AG04450 (cell line): ENCODE measurements at regions of chr18 and their contacts with region 1.

Region 1: DNA sequence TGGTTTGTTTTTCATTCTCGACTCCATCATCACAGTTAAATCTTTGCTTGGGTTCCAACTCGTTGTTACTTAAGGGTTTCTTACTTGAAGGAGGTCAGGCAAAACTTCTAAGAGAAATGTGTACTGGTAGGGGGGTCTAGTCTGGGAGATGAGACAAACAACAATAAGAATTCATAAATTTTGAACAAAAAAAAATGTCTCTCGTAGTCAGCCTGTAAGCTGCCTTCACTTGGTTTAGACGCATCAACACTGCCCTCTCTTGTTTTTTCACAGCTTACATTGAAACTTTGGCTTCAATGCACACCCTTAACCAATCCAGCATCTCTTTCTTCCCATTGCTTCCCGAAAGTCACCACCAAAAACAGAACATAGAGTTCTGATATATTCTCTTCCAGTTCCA is 576.4 kb upstream of the PIK3C3 start:
- DNase-seq: peak; percentile 44
- H3K4me3 ChIP-seq: no peak overlapping the region
- H3K27ac ChIP-seq: no peak overlapping the region
- H3K27me3 ChIP-seq: no peaks in the 10 kb centered on the region
- CTCF ChIP-seq: peak; percentile 59

Region 2: DNA sequence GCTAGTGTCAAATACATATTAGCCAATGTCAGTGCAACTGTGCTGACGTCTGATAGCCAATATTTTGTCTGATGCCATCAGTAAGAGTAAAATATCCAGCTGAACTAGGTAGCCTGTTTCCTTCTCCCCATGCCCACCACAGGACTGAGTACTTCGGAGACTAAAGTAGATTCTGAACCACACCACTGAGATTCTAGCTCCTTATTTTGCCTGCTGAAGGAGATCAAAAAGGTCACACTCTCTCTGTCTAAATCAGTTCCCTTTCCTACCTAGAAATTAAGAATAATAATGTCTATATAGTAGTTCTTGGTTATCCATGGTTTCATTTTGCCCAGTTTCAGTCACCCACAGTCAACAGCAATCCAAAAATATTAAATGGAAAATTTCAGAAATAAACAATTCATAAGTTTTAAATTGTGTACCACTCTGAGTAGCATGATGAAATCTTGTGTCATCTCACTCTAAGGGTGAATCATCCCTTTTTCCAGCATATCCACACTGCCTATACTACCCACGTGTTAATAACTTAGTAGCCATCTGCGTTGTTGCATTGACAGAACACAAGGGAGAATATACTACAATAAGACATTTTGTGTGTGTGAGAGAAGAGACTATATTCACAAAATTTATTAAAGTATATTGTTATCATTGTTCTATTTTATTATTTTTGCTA is 466.9 kb before region 1 on chr18:
- CTCF ChIA-PET with region 1: no interaction called
- POLR2A ChIA-PET with region 1: interaction called, 17 read pairs
- DNase-seq: peak; percentile 33
- H3K4me3 ChIP-seq: no peak overlapping the region
- H3K27ac ChIP-seq: peak overlapping the region; percentile 80
- H3K27me3 ChIP-seq: no peaks in the 10 kb centered on the region
- CTCF ChIP-seq: no peak

Region 3: DNA sequence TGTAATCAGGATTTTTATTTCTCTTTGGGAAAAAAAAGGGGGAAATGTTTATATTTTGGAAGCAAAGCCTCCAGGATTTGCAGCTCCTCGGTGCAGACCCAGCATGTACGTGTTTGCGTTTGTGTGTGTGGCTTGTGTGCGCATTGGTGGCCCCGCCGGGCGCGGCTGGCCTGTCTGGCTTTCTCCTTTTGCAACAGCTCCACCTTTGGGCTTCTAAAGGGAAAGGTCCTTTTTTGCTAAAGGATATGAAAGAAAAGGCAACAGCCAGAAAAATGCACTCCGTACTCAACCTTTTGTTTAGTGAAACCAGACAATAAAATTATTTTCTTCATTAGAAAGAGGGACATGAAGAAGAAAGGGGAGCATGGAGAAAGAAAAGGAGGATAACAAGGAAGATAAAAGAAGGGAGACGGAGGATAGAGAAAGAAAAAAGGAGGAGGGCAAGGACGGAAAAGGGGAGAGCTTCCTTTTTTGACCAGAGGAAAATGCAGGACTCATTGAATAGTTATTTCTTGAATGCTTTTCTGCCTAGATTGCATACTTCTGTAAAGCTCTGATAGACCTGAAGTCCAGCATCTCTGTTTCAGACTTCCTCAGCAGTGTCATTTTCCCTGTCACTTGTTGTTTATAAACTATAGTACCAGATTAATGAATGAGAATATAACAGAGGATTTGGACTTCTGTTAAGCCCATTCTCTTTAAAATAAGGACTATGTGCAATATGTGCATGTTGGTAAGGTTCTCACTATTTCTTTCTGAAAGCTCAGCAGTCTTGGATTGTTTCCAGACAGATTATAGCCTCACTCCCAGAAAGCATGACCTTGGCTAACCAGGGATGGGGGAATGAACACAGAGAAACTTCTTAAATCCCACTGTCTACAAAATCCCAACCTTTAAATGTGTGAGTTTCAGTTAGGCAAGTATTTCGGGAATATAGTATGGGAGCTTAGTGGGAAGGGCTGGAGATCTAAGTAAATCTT is 13.3 kb after region 1 on chr18:
- CTCF ChIA-PET with region 1: interaction called, 14 read pairs
- POLR2A ChIA-PET with region 1: no interaction called
- DNase-seq: peak; percentile 32
- H3K4me3 ChIP-seq: peak overlapping the region; percentile 51
- H3K27ac ChIP-seq: no peak overlapping the region
- H3K27me3 ChIP-seq: no peaks in the 10 kb centered on the region
- CTCF ChIP-seq: peak; percentile 88